Naive thymus-derived CD4-positive, alpha-beta T cell (primary cell): ENCODE measurements at regions of chr22 and their contacts with region 1.

Region 1: GRCh38 chr22:38744981-38745380 is 10.8 kb downstream of the SUN2 start:
- DNase-seq: no peak
- ATAC-seq: no peak
- H3K4me3 ChIP-seq: no peak overlapping the region
- H3K4me3 Mint-ChIP-seq: no peak overlapping the region
- H3K27ac ChIP-seq: peak overlapping the region; percentile 46
- H3K27ac Mint-ChIP-seq: peak overlapping the region in 8 of 9 donors; percentile 21 to 81 (median 58)
- H3K4me1 ChIP-seq: peaks cover 29 to 37% of the 10 kb centered on the region in 2 donors
- H3K4me1 Mint-ChIP-seq: peaks cover 13 to 59% (median 32%) of the 10 kb centered on the region in 7 donors
- H3K27me3 ChIP-seq: no peaks in the 10 kb centered on the region
- H3K27me3 Mint-ChIP-seq: no peaks in the 10 kb centered on the region

Region 2: GRCh38 chr22:38733329-38733723 is 11.7 kb before region 1 on chr22:
- CTCF ChIA-PET with region 1: interaction called, 24 read pairs
- POLR2A ChIA-PET with region 1: interaction called, 1,007 read pairs
- intact Hi-C with region 1: loop called in 1 of 2 experiments (anchors 2 kb)
- DNase-seq: peak in 5 of 9 donors; percentile 37 to 55 (median 49)
- ATAC-seq: peak; percentile 67
- H3K4me3 ChIP-seq: no peak overlapping the region
- H3K4me3 Mint-ChIP-seq: peak overlapping the region in 4 of 10 donors; percentile 11 to 51 (median 40)
- H3K27ac ChIP-seq: peak overlapping the region; percentile 54
- H3K27ac Mint-ChIP-seq: peak overlapping the region; percentile 76 to 91 (median 87)
- H3K4me1 ChIP-seq: peaks cover 15 to 18% of the 10 kb centered on the region in 2 donors
- H3K4me1 Mint-ChIP-seq: peaks cover 25 to 63% (median 53%) of the 10 kb centered on the region in 7 donors
- H3K27me3 ChIP-seq: no peaks in the 10 kb centered on the region
- H3K27me3 Mint-ChIP-seq: no peaks in the 10 kb centered on the region